H1 (cell line): ENCODE measurements at regions of chr4 and their contacts with region 1.

Region 1: DNA sequence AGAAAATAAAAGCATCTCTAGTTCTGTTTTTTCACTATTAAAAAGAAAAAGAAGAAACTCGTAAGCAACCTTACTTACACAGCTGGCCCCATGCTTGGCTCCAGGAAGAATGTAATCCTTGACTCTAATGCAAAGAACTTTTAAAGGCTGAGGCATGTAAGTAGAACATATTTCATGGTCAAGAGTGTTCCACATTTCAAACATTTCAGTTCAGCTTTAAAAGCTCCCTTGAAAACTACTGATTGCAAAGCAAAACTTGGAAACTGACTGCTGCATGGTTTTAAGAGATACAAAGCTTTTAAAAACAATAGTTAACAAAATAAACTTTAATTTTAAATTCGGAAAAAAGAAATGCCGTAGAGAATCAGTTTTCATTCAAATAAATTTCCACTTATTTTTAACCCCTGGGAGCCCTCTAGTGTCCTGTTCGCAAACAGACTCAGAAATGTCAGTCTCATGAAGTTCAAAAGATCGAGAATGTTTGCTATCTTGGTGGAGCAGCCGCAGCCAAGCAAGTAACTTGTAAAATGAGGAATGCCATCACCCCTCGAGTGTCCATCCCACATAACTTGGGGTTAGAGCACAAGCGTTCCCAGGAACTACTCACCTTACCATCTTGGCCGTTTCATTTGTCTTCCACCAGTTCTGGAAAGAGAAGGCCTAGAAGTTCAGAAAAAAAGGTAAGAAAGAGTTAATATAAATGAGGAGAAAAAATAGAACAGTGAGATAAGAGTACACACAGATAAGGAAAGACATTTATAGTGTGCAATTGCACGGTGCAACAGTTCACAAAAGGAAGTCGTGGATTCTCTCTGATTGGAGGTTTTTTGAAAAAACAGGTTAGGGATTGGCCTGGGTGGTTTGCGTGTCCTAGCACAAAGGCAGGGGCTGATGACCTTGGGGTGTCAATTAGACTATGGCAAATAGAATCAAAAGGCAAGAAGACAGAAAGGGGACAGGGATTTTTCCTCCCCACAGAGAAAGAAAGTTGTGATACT is at the start of gene GASK1B:
- DNase-seq: no peak
- H3K4me3 ChIP-seq: no peak within 1 kb of the TSS
- H3K27ac ChIP-seq: no peak within 1 kb of the TSS
- H3K4me1 ChIP-seq: no peaks in the 10 kb centered on the region
- H3K27me3 ChIP-seq: no peaks in the 10 kb centered on the region
- CTCF ChIP-seq: peak in 2 of 3 experiments; percentile 53 to 56; a peak in 2 of 4 replicates
- EP300 ChIP-seq: no peak
- POLR2A ChIP-seq: no peak
- RAD21 ChIP-seq: peak; percentile 73 to 77
- total RNA-seq, gene GASK1B: not detected in 2 replicates

Region 2: GRCh38 chr4:157992948-157993839 is 179.4 kb before region 1 on chr4:
- CTCF ChIA-PET with region 1: interaction called, 14 read pairs
- POLR2A ChIA-PET with region 1: no interaction called
- DNase-seq: no peak
- H3K4me3 ChIP-seq: no peak overlapping the region
- H3K27ac ChIP-seq: no peak overlapping the region
- H3K4me1 ChIP-seq: no peaks in the 10 kb centered on the region
- H3K27me3 ChIP-seq: no peaks in the 10 kb centered on the region
- CTCF ChIP-seq: no peak
- EP300 ChIP-seq: no peak
- POLR2A ChIP-seq: no peak
- RAD21 ChIP-seq: no peak

Region 3: DNA sequence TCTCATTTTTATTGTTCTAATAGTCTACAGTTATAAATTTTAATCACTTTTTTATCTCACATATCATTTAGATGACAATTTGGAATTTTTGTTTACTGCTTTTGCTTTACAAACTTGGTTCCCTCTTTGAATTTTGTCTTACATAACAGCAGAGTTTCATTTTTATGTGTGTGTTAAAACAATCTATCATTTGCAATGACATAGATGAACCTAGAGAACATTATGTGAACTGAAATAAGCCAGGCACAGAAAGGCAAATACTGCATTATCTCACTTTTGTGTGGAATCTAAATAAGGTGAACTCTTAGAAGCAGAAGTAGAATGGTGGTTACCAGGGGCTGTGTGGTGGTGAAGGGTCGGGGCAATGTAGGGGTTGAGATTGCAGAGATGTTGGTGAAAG is 170.4 kb before region 1 on chr4:
- CTCF ChIA-PET with region 1: interaction called, 15 read pairs
- POLR2A ChIA-PET with region 1: no interaction called
- DNase-seq: no peak
- H3K4me3 ChIP-seq: no peak overlapping the region
- H3K27ac ChIP-seq: no peak overlapping the region
- H3K4me1 ChIP-seq: no peaks in the 10 kb centered on the region
- H3K27me3 ChIP-seq: no peaks in the 10 kb centered on the region
- CTCF ChIP-seq: no peak
- EP300 ChIP-seq: no peak
- POLR2A ChIP-seq: no peak
- RAD21 ChIP-seq: no peak

Region 4: GRCh38 chr4:158146736-158147135 is 25.8 kb before region 1 on chr4:
- CTCF ChIA-PET with region 1: interaction called, 15 read pairs
- POLR2A ChIA-PET with region 1: no interaction called
- DNase-seq: no peak
- H3K4me3 ChIP-seq: no peak overlapping the region
- H3K27ac ChIP-seq: no peak overlapping the region
- H3K4me1 ChIP-seq: no peaks in the 10 kb centered on the region
- H3K27me3 ChIP-seq: no peaks in the 10 kb centered on the region
- CTCF ChIP-seq: no peak
- EP300 ChIP-seq: no peak
- POLR2A ChIP-seq: no peak
- RAD21 ChIP-seq: no peak

Region 5: GRCh38 chr4:158161551-158162354 is 10.8 kb before region 1 on chr4:
- CTCF ChIA-PET with region 1: interaction called, 23 read pairs
- POLR2A ChIA-PET with region 1: no interaction called
- DNase-seq: no peak
- H3K4me3 ChIP-seq: no peak overlapping the region
- H3K27ac ChIP-seq: no peak overlapping the region
- H3K4me1 ChIP-seq: no peaks in the 10 kb centered on the region
- H3K27me3 ChIP-seq: no peaks in the 10 kb centered on the region
- CTCF ChIP-seq: no peak
- EP300 ChIP-seq: no peak
- POLR2A ChIP-seq: no peak
- RAD21 ChIP-seq: no peak

Region 6: GRCh38 chr4:158182736-158183135 is 10.2 kb after region 1 on chr4:
- CTCF ChIA-PET with region 1: interaction called, 41 read pairs
- POLR2A ChIA-PET with region 1: no interaction called
- DNase-seq: no peak
- H3K4me3 ChIP-seq: no peak overlapping the region
- H3K27ac ChIP-seq: no peak overlapping the region
- H3K4me1 ChIP-seq: no peaks in the 10 kb centered on the region
- H3K27me3 ChIP-seq: no peaks in the 10 kb centered on the region
- CTCF ChIP-seq: no peak
- EP300 ChIP-seq: no peak
- POLR2A ChIP-seq: no peak
- RAD21 ChIP-seq: no peak

Region 7: DNA sequence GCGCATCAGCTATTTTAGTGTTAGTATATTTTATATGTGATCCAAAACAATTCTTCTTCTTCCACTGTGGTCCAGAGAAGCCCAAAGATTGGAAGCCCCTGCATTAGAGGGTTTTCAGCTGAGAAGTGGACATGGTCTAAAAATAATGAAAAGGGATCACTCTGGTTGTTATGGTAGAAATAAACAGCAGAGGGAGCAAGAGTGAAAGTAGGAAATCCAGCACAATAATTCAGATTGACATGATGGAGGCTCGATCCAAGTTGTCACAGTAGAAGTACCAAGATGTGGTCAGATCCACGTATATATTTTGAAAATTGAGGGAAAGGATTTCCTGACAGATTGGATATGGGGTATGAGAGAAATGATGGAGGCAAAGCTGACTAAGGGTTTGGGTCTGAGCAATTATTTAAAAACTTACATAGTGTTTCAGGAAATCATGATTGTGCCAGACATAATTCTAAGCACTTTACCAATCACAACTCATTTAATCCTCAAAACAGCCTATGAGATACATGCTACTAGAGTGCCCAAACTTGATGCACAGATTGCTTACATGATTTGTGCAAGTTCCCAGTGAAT is 20.7 kb after region 1 on chr4:
- CTCF ChIA-PET with region 1: interaction called, 41 read pairs
- POLR2A ChIA-PET with region 1: no interaction called
- DNase-seq: no peak
- H3K4me3 ChIP-seq: no peak overlapping the region
- H3K27ac ChIP-seq: no peak overlapping the region
- H3K4me1 ChIP-seq: no peaks in the 10 kb centered on the region
- H3K27me3 ChIP-seq: no peaks in the 10 kb centered on the region
- CTCF ChIP-seq: peak in 2 of 3 experiments; percentile 43 to 62; a peak in 2 of 4 replicates
- EP300 ChIP-seq: no peak
- POLR2A ChIP-seq: no peak
- RAD21 ChIP-seq: peak; percentile 49 to 51

Region 8: GRCh38 chr4:158384407-158384806 is 211.8 kb after region 1 on chr4:
- CTCF ChIA-PET with region 1: no interaction called
- POLR2A ChIA-PET with region 1: no interaction called
- DNase-seq: no peak
- H3K4me3 ChIP-seq: no peak overlapping the region
- H3K27ac ChIP-seq: no peak overlapping the region
- H3K4me1 ChIP-seq: no peaks in the 10 kb centered on the region
- H3K27me3 ChIP-seq: no peaks in the 10 kb centered on the region
- CTCF ChIP-seq: no peak
- EP300 ChIP-seq: no peak
- POLR2A ChIP-seq: no peak
- RAD21 ChIP-seq: no peak